ENCODE measurements at regions of chr13 and their contacts with region 1.

Region 1: GRCh38 chr13:20495082-20496023 is 30.3 kb downstream of the CRYL1 start:
- DNase-seq: peak; percentile 46 to 65
- ATAC-seq: peak; percentile 78 to 82
- H3K4me3 ChIP-seq: no peak overlapping the region
- H3K27ac ChIP-seq: peak overlapping the region; percentile 41 to 44; a peak in 2 of 6 replicates
- H3K4me1 ChIP-seq: peaks cover 5% of the 10 kb centered on the region; the same call in 2 of the 3 replicates
- CTCF ChIP-seq: peak; percentile 83
- EP300 ChIP-seq: no peak
- POLR2A ChIP-seq: no peak
- RAD21 ChIP-seq: peak; percentile 84 to 86

Region 2: DNA sequence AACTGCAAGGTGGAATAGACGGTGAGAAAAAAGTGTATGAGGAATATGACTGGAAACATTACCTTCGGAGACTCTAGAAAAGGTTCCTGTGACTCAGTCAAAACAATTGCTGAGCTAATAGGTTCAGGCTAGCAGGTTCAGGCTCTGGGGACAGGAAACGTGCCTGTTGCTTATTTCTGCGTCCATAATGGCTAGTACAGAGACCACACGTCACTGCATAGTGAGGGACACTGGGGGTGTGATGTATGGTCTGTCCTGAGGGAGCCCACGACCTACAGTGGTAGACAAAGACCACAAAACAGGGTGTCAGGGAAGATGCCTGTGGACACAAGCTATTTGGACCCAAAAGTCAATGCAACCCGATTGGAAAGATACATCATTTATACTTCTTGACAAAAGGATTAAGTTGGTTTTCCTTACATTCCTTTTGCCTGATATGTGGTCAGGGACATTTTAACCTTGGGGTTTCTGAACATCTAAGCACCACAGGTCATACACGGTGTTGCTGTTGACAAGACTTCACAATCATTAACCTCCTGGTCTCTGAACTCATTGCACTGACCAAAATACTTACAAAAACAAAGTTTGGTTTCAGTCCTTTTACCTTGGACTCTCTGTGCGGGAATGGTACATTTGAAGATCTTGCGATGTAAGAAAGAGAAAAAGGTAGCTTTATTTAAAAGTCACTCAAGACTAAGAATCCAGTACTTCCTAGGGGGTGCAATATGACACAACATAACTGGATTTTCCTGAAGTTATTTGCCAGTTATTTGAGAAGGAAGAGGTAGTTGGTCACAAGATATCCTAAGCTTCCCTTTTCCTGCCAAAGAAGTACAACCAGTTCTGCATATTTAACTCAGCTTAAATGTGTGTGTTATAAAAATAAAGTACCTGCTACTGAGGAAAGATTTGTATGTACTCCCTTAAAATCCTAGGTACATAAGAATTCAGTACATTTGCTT is 10.3 kb after region 1 on chr13:
- CTCF ChIA-PET with region 1: interaction called, 17 read pairs
- POLR2A ChIA-PET with region 1: no interaction called
- DNase-seq: no peak
- ATAC-seq: no peak
- H3K4me3 ChIP-seq: no peak overlapping the region
- H3K27ac ChIP-seq: no peak overlapping the region
- H3K4me1 ChIP-seq: no peaks in the 10 kb centered on the region
- CTCF ChIP-seq: no peak
- EP300 ChIP-seq: no peak
- POLR2A ChIP-seq: no peak
- RAD21 ChIP-seq: no peak

Region 3: DNA sequence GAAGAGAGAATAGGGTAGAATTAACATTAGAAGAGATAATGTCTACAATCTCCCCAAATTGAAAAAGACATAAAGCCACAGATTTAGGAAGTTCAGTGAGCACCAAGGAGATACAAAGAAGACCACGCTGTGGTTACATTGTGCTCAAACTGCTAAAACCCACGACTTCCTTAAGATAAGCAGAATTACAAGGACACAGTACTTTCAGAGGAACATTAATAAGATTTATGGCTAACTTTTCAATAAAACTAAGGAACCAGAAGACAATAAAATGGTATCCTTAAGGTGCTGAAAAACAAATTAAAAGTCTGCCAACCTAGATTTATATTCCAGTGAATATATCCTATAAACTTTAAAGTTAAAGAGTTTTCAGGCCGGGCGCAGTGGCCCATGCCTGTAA is 200.7 kb after region 1 on chr13:
- CTCF ChIA-PET with region 1: no interaction called
- POLR2A ChIA-PET with region 1: no interaction called
- DNase-seq: no peak
- ATAC-seq: no peak
- H3K4me3 ChIP-seq: no peak overlapping the region
- H3K27ac ChIP-seq: no peak overlapping the region
- H3K4me1 ChIP-seq: no peaks in the 10 kb centered on the region
- CTCF ChIP-seq: no peak
- EP300 ChIP-seq: no peak
- POLR2A ChIP-seq: no peak
- RAD21 ChIP-seq: no peak

Region 4: DNA sequence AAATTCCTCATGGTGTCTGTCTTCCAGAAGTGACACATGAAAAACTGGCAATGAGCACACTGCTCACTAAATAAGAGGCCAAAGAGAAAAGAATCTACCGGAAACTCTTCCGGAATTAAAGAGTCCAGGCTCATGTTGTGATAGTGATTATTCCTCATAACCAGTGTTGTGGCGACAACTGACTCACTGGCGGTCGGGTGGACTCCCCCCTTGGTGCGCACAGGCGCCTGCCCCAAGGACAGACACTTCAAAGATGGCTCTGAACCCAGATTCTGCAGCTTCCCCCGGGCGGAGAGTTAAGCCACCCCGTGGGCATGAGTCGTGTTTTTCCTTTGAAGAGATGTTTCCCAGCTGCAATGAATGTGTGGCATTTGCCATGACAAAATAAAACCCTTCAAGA is 218.4 kb after region 1 on chr13:
- CTCF ChIA-PET with region 1: interaction called, 36 read pairs
- POLR2A ChIA-PET with region 1: no interaction called
- DNase-seq: no peak
- ATAC-seq: no peak
- H3K4me3 ChIP-seq: no peak overlapping the region
- H3K27ac ChIP-seq: no peak overlapping the region
- H3K4me1 ChIP-seq: peaks cover 10% of the 10 kb centered on the region; the same call in 2 of the 3 replicates
- CTCF ChIP-seq: no peak
- EP300 ChIP-seq: no peak
- POLR2A ChIP-seq: no peak
- RAD21 ChIP-seq: no peak

Region 5: DNA sequence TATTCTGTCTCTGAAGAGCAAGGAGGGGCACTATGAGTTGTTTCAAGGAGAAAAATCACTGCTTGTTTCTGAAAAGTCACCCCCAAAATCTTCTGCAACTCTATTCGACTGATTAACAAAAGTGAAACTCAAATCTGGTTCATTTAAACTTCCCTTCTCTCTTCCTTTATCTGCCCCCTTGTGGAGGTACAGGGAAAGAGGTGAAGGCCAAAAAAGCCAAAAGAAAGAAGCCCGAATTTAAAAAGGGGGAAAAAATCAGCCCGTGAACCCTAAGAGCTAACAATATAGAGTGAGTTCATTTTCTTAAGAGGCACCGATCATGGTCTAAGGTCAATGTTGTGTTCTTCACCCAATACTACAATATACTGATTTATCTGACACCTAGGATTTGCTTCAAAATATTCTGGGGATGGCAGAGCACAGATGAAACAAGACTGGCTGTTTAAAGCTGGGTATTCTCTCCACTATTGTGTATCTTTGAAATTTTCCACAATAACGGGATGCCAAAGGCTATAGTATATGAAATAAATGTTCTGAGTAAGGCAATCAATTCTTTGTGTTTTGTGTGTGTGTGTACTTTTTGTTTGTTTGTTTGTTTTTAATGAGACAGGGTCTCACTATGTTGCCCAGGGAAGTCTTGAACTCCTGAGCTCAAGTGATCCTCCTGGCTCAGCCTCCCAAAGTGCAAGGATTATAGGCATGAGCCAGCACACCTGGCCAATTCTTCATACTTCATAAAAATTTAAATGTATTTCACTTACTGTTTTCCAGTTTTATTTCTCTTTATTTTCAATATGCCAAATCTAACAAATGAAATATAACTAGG is 333.4 kb after region 1 on chr13:
- CTCF ChIA-PET with region 1: interaction called, 35 read pairs
- POLR2A ChIA-PET with region 1: no interaction called
- DNase-seq: peak; percentile 3 to 40
- ATAC-seq: peak; percentile 44 to 54; a peak in 2 of 6 replicates
- H3K4me3 ChIP-seq: peak overlapping the region; percentile 30; the same call in 2 of the 3 replicates
- H3K27ac ChIP-seq: peak overlapping the region; percentile 13 to 39; a peak in 2 of 6 replicates
- H3K4me1 ChIP-seq: 0 out of 3 replicates have a peak, but pooled peaks cover 3% of the 10 kb centered on the region
- CTCF ChIP-seq: peak; percentile 66
- EP300 ChIP-seq: no peak
- POLR2A ChIP-seq: no peak
- RAD21 ChIP-seq: peak; percentile 57 to 58; a peak in 4 of 5 replicates

Region 6: DNA sequence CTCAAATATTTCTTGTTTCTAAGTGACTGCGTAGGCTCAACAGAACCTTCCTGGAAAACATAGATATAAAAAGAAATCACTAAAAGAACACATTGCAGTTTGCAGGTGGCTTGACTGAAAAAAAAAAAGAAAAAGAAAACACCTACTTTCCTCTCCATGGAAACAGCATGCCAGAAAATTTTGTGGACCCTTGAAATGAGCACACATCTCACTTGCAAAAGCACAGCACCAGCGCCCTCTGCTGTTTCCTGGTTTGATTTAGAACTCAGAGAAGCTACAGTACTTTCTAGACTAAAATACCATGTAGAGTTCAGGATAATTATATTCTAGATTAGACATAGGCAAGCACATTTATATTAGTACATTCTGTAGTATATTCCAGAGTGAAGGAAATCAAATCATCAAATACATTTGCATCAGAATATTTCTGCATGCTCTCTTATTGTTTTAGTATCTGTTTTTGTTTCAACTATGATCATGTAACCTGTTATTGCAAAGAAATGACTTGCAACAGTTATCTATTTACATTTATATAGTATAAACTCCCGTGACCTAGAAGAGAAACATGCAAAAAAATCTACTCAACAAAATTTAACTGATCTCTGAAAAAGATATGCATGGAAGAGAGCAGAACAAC is 429.5 kb after region 1 on chr13:
- CTCF ChIA-PET with region 1: interaction called, 28 read pairs
- POLR2A ChIA-PET with region 1: no interaction called
- DNase-seq: peak; percentile 10 to 77
- ATAC-seq: peak; percentile 66 to 84; a peak in 4 of 6 replicates
- H3K4me3 ChIP-seq: no peak overlapping the region
- H3K27ac ChIP-seq: no peak overlapping the region
- H3K4me1 ChIP-seq: no peaks in the 10 kb centered on the region
- CTCF ChIP-seq: peak; percentile 71
- EP300 ChIP-seq: no peak
- POLR2A ChIP-seq: no peak
- RAD21 ChIP-seq: peak; percentile 74 to 79